ENCODE measurements at regions of chr12 and their contacts with region 1.

Region 1: GRCh38 chr12:55973598-55974307 is at the start of gene RAB5B:
- DNase-seq: peak; percentile 94

Region 2: GRCh38 chr12:54411391-54412241 is 1562.1 kb before region 1 on chr12:
- CTCF ChIA-PET with region 1: no interaction called
- POLR2A ChIA-PET with region 1: no interaction called
- DNase-seq: no peak

Region 3: GRCh38 chr12:56007564-56008559 is 34.1 kb after region 1 on chr12:
- CTCF ChIA-PET with region 1: no interaction called
- POLR2A ChIA-PET with region 1: interaction called, 12 read pairs
- DNase-seq: peak; percentile 75